CD8-positive, alpha-beta memory T cell (primary cell): ENCODE measurements at regions of chr2 and their contacts with region 1.

Region 1: GRCh38 chr2:241096979-241097378 is 5.1 kb downstream of the MTERF4 start:
- DNase-seq: no peak
- H3K4me3 ChIP-seq: no peak overlapping the region
- H3K4me3 Mint-ChIP-seq: peak overlapping the region in 1 of 7 donors; percentile 61
- H3K27ac ChIP-seq: no peak overlapping the region
- H3K27ac Mint-ChIP-seq: peak overlapping the region; percentile 73 to 94 (median 84)
- H3K4me1 ChIP-seq: peaks cover 58% of the 10 kb centered on the region
- H3K4me1 Mint-ChIP-seq: peaks cover 41 to 84% (median 75%) of the 10 kb centered on the region in 3 donors
- H3K27me3 ChIP-seq: no peaks in the 10 kb centered on the region
- H3K27me3 Mint-ChIP-seq: no peaks in the 10 kb centered on the region

Region 2: GRCh38 chr2:241081643-241082340 is 15.2 kb before region 1 on chr2:
- CTCF ChIA-PET with region 1: interaction called, 18 read pairs
- POLR2A ChIA-PET with region 1: interaction called, 6 read pairs
- DNase-seq: no peak
- H3K4me3 ChIP-seq: no peak overlapping the region
- H3K4me3 Mint-ChIP-seq: no peak overlapping the region
- H3K27ac ChIP-seq: no peak overlapping the region
- H3K27ac Mint-ChIP-seq: peak overlapping the region in 5 of 8 donors; percentile 12 to 95 (median 60)
- H3K4me1 ChIP-seq: peaks cover 3% of the 10 kb centered on the region
- H3K4me1 Mint-ChIP-seq: peaks cover 5 to 32% (median 17%) of the 10 kb centered on the region in 3 donors
- H3K27me3 ChIP-seq: no peaks in the 10 kb centered on the region
- H3K27me3 Mint-ChIP-seq: no peaks in the 10 kb centered on the region

Region 3: GRCh38 chr2:241110607-241111439 is 13.8 kb after region 1 on chr2:
- CTCF ChIA-PET with region 1: interaction called, 5 read pairs
- POLR2A ChIA-PET with region 1: interaction called, 24 read pairs
- DNase-seq: peak in 2 of 5 donors; percentile 41 to 47
- H3K4me3 ChIP-seq: peak overlapping the region; percentile 40
- H3K4me3 Mint-ChIP-seq: peak overlapping the region; percentile 78 to 95 (median 90)
- H3K27ac ChIP-seq: peak overlapping the region; percentile 51
- H3K27ac Mint-ChIP-seq: peak overlapping the region; percentile 80 to 99 (median 96)
- H3K4me1 ChIP-seq: peaks cover 53% of the 10 kb centered on the region
- H3K4me1 Mint-ChIP-seq: peaks cover 48 to 76% (median 48%) of the 10 kb centered on the region in 3 donors
- H3K27me3 ChIP-seq: no peaks in the 10 kb centered on the region
- H3K27me3 Mint-ChIP-seq: no peaks in the 10 kb centered on the region

Region 4: DNA sequence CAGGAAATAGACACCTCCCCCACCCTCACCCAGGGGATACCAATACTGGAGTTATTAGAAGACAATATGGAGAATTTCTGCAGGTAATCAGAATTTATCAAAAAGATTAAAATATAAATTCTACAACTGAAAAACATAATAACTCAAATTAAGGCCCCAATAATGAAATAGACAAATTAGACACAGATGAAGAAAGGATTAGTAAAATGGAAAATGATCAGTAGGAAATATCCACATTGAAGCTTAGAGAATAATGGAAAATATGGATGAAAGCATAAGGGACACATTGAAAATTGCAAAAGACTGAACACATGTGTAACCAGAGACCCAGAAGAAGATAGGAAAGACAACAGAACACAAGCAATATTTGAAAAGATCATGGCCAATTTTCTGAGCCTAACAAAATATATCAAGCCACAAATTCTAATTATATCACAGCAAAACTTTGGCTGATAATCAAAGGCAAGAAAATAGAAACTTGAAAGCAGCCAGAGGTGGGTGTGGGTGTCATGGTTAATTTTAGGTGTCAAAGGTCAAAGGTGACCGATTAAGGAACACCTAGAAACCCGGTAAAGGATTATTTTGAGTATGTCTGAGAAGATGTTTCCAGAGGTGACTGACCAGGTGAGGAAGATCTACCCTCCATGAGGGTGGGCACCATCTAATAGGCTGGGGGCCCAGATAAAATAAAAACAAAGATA is 489.7 kb after region 1 on chr2:
- CTCF ChIA-PET with region 1: no interaction called
- POLR2A ChIA-PET with region 1: interaction called, 10 read pairs
- DNase-seq: no peak
- H3K4me3 ChIP-seq: no peak overlapping the region
- H3K4me3 Mint-ChIP-seq: no peak overlapping the region
- H3K27ac ChIP-seq: no peak overlapping the region
- H3K27ac Mint-ChIP-seq: no peak overlapping the region
- H3K4me1 ChIP-seq: no peaks in the 10 kb centered on the region
- H3K4me1 Mint-ChIP-seq: no peaks in the 10 kb centered on the region
- H3K27me3 ChIP-seq: no peaks in the 10 kb centered on the region
- H3K27me3 Mint-ChIP-seq: no peaks in the 10 kb centered on the region